ENCODE measurements at regions of chr7 and their contacts with region 1.

Region 1: DNA sequence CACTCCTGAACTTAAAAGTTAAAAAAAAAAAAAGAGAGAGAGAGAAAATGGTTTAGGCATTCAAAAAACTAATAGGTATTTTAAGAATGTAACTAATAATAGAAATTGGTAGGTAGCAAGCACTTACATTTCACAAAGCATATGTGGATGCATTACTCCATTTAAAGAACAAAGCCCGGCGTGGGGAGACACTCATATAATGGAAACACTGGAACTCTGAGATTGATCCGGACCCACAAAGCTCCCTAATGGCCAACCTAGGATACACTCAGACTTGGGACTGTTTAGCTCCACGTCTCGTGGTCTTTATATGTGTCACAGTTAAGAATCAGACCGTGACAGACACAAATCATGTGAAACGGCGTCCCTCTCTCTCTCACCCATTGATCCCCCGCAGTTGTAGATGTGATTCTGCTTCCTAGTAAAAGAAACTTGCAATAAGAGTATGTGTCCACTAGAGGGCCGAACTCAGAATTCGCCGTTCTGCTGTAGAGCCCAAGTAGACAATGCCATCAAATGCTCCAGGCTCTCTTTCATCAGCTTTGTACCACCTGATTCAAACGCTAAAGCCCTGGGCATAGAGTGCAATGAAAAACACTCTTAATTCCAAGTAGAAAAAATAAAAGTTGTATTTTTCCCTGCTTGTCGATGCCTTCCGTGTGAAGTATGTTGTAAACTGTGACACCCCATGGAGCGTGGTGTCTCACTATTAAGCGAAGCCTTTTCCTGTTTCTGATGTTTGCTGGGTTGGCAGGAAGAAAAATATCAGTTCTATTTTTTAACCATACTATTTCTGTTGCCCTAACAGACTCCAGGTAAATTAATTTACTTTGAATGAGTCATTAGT is 429.0 kb upstream of the MTPN start:
- DNase-seq: peak; percentile 65
- H3K4me3 ChIP-seq: peak overlapping the region in 1 of 2 experiments; percentile 21; a peak in 1 of 4 replicates
- H3K27ac ChIP-seq: no peak overlapping the region
- H3K4me1 ChIP-seq: peaks cover 0 to 2% of the 10 kb centered on the region in 2 experiments; a peak in 1 of 4 replicates
- H3K27me3 ChIP-seq: no peaks in the 10 kb centered on the region
- CTCF ChIP-seq: peak; percentile 90
- EP300 ChIP-seq: no peak
- RAD21 ChIP-seq: peak; percentile 85

Region 2: DNA sequence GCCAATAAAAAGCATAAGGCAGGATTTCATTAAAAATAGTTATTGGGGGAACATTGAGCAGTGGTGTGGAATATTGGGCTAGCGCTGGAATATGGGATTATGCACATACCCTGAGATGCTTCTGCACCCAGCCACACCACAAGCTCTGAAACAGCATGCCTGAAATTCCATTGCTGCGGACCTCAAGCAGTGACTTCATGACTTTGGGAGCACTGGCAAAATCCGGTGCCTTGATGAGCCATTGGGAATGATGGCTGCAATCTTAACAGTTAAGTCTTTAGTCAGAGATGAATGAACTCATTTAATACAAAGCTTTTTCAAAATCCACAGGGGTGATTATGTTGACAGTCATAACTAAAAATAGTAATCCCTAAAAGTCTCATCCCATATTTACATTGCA is 154.3 kb before region 1 on chr7:
- CTCF ChIA-PET with region 1: no interaction called
- POLR2A ChIA-PET with region 1: no interaction called
- DNase-seq: no peak
- H3K4me3 ChIP-seq: no peak overlapping the region
- H3K27ac ChIP-seq: no peak overlapping the region
- H3K4me1 ChIP-seq: no peaks in the 10 kb centered on the region; a peak in 1 of 4 replicates
- H3K27me3 ChIP-seq: no peaks in the 10 kb centered on the region
- CTCF ChIP-seq: no peak
- EP300 ChIP-seq: no peak
- RAD21 ChIP-seq: no peak

Region 3: DNA sequence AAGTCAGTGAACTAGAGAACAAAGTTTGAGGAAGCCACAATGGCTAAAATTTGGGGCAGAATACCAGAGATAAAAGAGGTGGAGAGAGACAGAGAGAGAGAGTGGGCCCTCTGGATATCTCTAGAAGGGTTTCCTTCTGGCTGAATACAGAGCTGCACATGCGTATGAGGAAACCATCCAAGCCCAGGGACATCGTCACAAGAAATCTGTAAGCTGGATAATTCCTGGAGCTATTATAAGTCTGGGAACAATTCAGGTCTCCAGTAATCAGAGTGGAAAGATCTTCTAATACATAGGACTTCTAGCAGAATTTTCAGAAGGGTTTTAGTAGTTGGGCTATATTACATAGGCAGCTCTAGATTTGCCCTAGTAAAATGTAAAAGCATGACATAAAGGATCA is 13.3 kb before region 1 on chr7:
- CTCF ChIA-PET with region 1: interaction called, 15 read pairs
- POLR2A ChIA-PET with region 1: no interaction called
- DNase-seq: no peak
- H3K4me3 ChIP-seq: no peak overlapping the region
- H3K27ac ChIP-seq: no peak overlapping the region
- H3K4me1 ChIP-seq: no peaks in the 10 kb centered on the region; a peak in 3 of 4 replicates
- H3K27me3 ChIP-seq: no peaks in the 10 kb centered on the region
- CTCF ChIP-seq: no peak
- EP300 ChIP-seq: no peak
- RAD21 ChIP-seq: no peak

Region 4: GRCh38 chr7:136489808-136490207 is 83.7 kb after region 1 on chr7:
- CTCF ChIA-PET with region 1: interaction called, 11 read pairs
- POLR2A ChIA-PET with region 1: no interaction called
- DNase-seq: no peak
- H3K4me3 ChIP-seq: no peak overlapping the region
- H3K27ac ChIP-seq: no peak overlapping the region
- H3K4me1 ChIP-seq: no peaks in the 10 kb centered on the region
- H3K27me3 ChIP-seq: no peaks in the 10 kb centered on the region
- CTCF ChIP-seq: no peak
- EP300 ChIP-seq: no peak
- RAD21 ChIP-seq: no peak

Region 5: GRCh38 chr7:136637813-136638212 is 231.7 kb after region 1 on chr7:
- CTCF ChIA-PET with region 1: interaction called, 10 read pairs
- POLR2A ChIA-PET with region 1: no interaction called
- DNase-seq: no peak
- H3K4me3 ChIP-seq: no peak overlapping the region
- H3K27ac ChIP-seq: no peak overlapping the region
- H3K4me1 ChIP-seq: peaks cover 0 to 7% of the 10 kb centered on the region in 2 experiments; a peak in 2 of 4 replicates
- H3K27me3 ChIP-seq: no peaks in the 10 kb centered on the region
- CTCF ChIP-seq: no peak
- EP300 ChIP-seq: no peak
- RAD21 ChIP-seq: no peak

Region 6: GRCh38 chr7:136868496-136869000 is 462.4 kb after region 1 on chr7 and contains the start of gene CHRM2:
- CTCF ChIA-PET with region 1: interaction called, 10 read pairs
- POLR2A ChIA-PET with region 1: no interaction called
- DNase-seq: peak; percentile 55
- H3K4me3 ChIP-seq: peak within 1 kb of the TSS; percentile 43 to 47
- H3K27ac ChIP-seq: no peak within 1 kb of the TSS
- H3K4me1 ChIP-seq: peaks cover 3 to 32% of the 10 kb centered on the region in 2 experiments; a peak in 1 of 4 replicates
- H3K27me3 ChIP-seq: peaks cover 43% of the 10 kb centered on the region
- CTCF ChIP-seq: no peak
- EP300 ChIP-seq: no peak
- RAD21 ChIP-seq: no peak
- polyA plus RNA-seq, gene CHRM2: 0.02 and 0.23 TPM in 2 replicates

Measured in SK-N-SH (cell line).